Common myeloid progenitor, CD34-positive (primary cell): ENCODE measurements at regions of chr16 and their contacts with region 1.

Region 1: GRCh38 chr16:55701442-55702319 is 45.9 kb downstream of the SLC6A2 start:
- DNase-seq: peak; percentile 70 to 86 (median 81)
- H3K4me3 ChIP-seq: no peak overlapping the region
- H3K27ac ChIP-seq: no peak overlapping the region
- H3K4me1 ChIP-seq: peaks cover 0 to 13% (median 8%) of the 10 kb centered on the region in 4 experiments
- H3K27me3 ChIP-seq: peaks cover 0 to 2% (median 0%) of the 10 kb centered on the region in 5 experiments

Region 2: GRCh38 chr16:55480228-55480661 is 221.4 kb before region 1 on chr16:
- CTCF ChIA-PET with region 1: interaction called, 14 read pairs
- POLR2A ChIA-PET with region 1: no interaction called
- DNase-seq: peak in 2 of 3 donors; percentile 31 to 50
- H3K4me3 ChIP-seq: peak overlapping the region in 6 of 7 experiments; percentile 34 to 81 (median 72)
- H3K27ac ChIP-seq: no peak overlapping the region
- H3K4me1 ChIP-seq: peaks cover 0 to 27% (median 21%) of the 10 kb centered on the region in 4 experiments
- H3K27me3 ChIP-seq: peaks cover 0 to 12% (median 0%) of the 10 kb centered on the region in 5 experiments

Region 3: DNA sequence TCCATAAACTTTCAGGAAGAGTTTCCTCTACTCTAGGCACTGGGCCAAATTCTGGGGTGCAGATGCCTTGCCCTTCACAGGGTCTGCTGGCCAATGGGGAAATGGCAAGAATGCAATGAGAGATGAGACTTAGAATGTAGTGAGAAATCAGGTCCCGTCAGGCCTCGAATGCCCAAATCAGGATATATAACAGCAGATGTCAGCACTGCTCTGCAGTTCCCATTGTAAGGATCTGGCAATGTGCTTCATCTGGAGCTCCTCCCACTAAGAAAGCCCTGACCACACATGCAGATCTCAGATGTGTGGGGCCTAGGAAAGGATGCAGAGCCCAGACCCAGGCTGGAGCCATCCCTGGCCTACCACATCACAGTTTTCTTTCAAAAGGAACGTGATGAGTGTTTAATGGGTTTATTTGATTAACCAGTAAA is 206.7 kb before region 1 on chr16:
- CTCF ChIA-PET with region 1: interaction called, 118 read pairs
- POLR2A ChIA-PET with region 1: no interaction called
- DNase-seq: peak; percentile 65 to 78 (median 77)
- H3K4me3 ChIP-seq: no peak overlapping the region
- H3K27ac ChIP-seq: no peak overlapping the region
- H3K4me1 ChIP-seq: peaks cover 0 to 48% (median 32%) of the 10 kb centered on the region in 4 experiments
- H3K27me3 ChIP-seq: no peaks in the 10 kb centered on the region

Region 4: GRCh38 chr16:55502801-55503366 is 198.8 kb before region 1 on chr16:
- CTCF ChIA-PET with region 1: interaction called, 118 read pairs
- POLR2A ChIA-PET with region 1: no interaction called
- DNase-seq: no peak
- H3K4me3 ChIP-seq: no peak overlapping the region
- H3K27ac ChIP-seq: no peak overlapping the region
- H3K4me1 ChIP-seq: peaks cover 6 to 43% (median 27%) of the 10 kb centered on the region in 4 experiments
- H3K27me3 ChIP-seq: no peaks in the 10 kb centered on the region

Region 5: DNA sequence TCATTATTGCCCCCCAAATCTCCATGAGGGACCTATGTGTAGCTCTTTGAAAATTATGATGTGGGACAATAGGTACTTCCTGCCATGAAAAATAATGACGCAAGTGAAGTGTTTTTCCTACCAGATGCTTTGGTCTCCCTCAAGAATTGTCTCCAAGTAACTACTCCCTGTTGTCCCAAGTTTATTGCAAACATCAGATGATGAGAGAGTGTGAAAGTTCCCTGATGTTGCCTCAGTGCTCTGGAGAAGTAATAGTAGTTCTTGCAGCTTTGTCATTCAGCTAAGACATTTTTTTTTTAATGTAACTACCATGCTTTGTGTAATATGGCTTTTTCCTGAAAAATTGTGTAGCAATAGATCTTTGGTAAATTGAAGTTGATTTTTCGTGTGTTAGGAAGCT is 172.7 kb before region 1 on chr16:
- CTCF ChIA-PET with region 1: interaction called, 17 read pairs
- POLR2A ChIA-PET with region 1: no interaction called
- DNase-seq: no peak
- H3K4me3 ChIP-seq: no peak overlapping the region
- H3K27ac ChIP-seq: no peak overlapping the region
- H3K4me1 ChIP-seq: peaks cover 0 to 2% (median 0%) of the 10 kb centered on the region in 4 experiments
- H3K27me3 ChIP-seq: no peaks in the 10 kb centered on the region

Region 6: GRCh38 chr16:55687802-55688201 is 13.9 kb before region 1 on chr16:
- CTCF ChIA-PET with region 1: interaction called, 26 read pairs
- POLR2A ChIA-PET with region 1: no interaction called
- DNase-seq: peak in 2 of 3 donors; percentile 33 to 41
- H3K4me3 ChIP-seq: no peak overlapping the region
- H3K27ac ChIP-seq: no peak overlapping the region
- H3K4me1 ChIP-seq: peaks cover 0 to 16% (median 5%) of the 10 kb centered on the region in 4 experiments
- H3K27me3 ChIP-seq: no peaks in the 10 kb centered on the region

Region 7: DNA sequence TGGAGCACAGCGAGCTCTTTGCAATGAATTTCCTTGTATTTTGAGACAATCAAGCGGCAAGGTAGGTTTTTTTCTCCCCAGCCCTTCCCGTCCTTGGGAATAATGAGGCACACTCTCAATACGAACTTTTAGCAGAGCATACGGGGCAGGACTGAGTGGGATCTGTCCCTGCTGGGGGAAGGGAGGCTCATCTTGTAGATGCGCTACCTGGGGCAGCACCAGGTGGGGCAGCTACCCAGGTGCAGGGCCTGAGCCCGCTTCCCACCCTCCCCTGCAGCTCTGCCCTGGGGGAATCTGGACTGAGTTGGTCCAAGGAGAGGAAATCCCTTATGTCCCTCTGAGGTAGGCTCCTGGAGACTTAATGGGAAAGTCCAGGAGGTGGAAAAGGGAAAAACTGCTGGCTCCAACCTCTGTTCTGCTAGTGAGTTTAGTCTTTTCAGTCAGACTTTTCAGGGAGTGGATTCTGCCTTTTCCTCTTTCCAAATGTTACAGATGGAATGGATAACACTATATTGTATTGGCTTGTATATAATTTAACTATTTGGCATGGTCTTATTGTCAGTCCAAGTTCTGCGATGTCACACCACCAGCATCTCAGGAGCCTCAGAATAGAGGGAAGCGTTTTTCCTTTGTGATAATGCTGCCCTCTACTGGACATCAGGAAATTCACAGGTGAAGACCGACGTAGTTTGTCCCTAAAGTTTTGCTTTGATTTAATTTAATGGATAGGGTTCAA is 140.9 kb after region 1 on chr16:
- CTCF ChIA-PET with region 1: interaction called, 14 read pairs
- POLR2A ChIA-PET with region 1: no interaction called
- DNase-seq: peak; percentile 51 to 66 (median 58)
- H3K4me3 ChIP-seq: no peak overlapping the region
- H3K27ac ChIP-seq: no peak overlapping the region
- H3K4me1 ChIP-seq: peaks cover 0 to 6% (median 0%) of the 10 kb centered on the region in 4 experiments
- H3K27me3 ChIP-seq: peaks cover 2 to 13% (median 3%) of the 10 kb centered on the region in 5 experiments